ENCODE measurements at regions of chr1 and their contacts with region 1.

Region 1: GRCh38 chr1:180252638-180253536 is 22.8 kb downstream of the LHX4 start:
- DNase-seq: peak; percentile 13
- H3K4me3 ChIP-seq: no peak overlapping the region
- H3K27ac ChIP-seq: no peak overlapping the region
- H3K4me1 ChIP-seq: no peaks in the 10 kb centered on the region
- H3K27me3 ChIP-seq: peaks cover 0 to 91% (median 0%) of the 10 kb centered on the region in 4 donors
- CTCF ChIP-seq: peak; percentile 63 to 79 (median 70)
- POLR2A ChIP-seq: no peak

Region 2: DNA sequence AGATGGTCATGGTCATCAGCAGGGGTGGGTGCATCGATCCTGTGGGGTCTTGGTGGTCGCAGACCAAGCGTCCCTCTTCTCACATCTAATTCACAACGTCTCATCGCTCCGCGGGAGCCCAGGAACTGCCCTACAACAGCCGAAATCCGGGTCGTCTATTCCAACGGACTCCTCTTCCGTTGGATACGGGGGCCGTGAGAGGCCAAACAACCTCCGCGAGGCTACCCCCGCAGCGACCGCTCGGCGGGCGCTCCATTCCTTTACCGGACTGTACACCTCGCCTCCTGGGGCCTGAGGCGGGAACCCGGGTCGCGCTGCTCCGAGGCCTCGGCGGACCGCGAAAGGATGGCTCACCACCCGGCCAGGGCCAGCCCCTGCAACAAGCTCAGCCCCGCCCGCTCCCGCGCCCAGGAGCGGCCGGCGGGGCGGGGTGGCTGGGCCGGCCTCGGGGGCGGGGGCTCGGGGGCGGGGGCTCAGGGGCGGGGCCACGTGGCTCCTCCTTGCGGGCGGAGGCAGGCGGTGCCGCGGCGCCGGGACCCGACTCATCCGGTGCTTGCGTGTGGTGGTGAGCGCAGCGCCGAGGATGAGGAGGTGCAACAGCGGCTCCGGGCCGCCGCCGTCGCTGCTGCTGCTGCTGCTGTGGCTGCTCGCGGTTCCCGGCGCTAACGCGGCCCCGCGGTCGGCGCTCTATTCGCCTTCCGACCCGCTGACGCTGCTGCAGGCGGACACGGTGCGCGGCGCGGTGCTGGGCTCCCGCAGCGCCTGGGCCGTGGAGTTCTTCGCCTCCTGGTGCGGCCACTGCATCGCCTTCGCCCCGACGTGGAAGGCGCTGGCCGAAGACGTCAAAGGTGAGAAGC is 98.3 kb before region 1 on chr1 and contains the start of gene QSOX1:
- intact Hi-C with region 1: no loop called
- DNase-seq: peak; percentile 60
- H3K4me3 ChIP-seq: peak within 1 kb of the TSS; percentile 87 to 99 (median 92)
- H3K27ac ChIP-seq: peak within 1 kb of the TSS; percentile 87 to 96 (median 93)
- H3K4me1 ChIP-seq: peaks cover 6 to 61% (median 25%) of the 10 kb centered on the region in 3 donors
- H3K27me3 ChIP-seq: no peaks in the 10 kb centered on the region
- CTCF ChIP-seq: peak in 3 of 6 experiments; percentile 8 to 43 (median 17)
- POLR2A ChIP-seq: peak in 3 of 4 donors; percentile 83 to 96 (median 93)
- total RNA-seq, gene QSOX1: 74.9 to 184 (median 107) TPM

Region 3: DNA sequence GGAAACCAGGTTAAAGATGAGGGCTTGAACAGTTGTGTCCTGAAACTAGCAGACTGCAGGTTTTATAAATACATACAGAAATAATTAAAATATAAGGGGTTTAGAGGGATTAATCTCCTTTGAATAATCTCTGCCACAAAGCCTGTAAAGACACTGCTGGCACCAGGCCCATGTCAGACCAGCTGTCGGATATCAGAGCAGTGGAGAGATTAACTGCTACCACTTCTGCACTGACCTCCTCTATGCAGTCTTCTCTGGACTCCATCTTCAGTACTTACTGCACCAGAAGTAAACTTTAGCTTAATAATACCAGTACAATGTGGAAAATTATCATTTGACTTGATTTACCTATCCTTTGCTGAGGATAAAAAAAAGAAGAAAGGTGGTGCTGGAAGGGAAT is 105.8 kb after region 1 on chr1:
- intact Hi-C with region 1: no loop called
- DNase-seq: no peak
- H3K4me3 ChIP-seq: no peak overlapping the region
- H3K27ac ChIP-seq: no peak overlapping the region
- H3K4me1 ChIP-seq: peaks cover 0 to 5% (median 0%) of the 10 kb centered on the region in 3 donors
- H3K27me3 ChIP-seq: no peaks in the 10 kb centered on the region
- CTCF ChIP-seq: no peak
- POLR2A ChIP-seq: no peak

Region 4: GRCh38 chr1:180415985-180416633 is 163.2 kb after region 1 on chr1:
- intact Hi-C with region 1: loop called (anchors 10 kb)
- DNase-seq: no peak
- H3K4me3 ChIP-seq: no peak overlapping the region
- H3K27ac ChIP-seq: no peak overlapping the region
- H3K4me1 ChIP-seq: no peaks in the 10 kb centered on the region
- H3K27me3 ChIP-seq: no peaks in the 10 kb centered on the region
- CTCF ChIP-seq: peak in 5 of 6 experiments; percentile 25 to 56 (median 37)
- POLR2A ChIP-seq: no peak

Region 5: GRCh38 chr1:180470031-180470430 is 217.1 kb after region 1 on chr1:
- intact Hi-C with region 1: loop called (anchors 10 kb)
- DNase-seq: no peak
- H3K4me3 ChIP-seq: no peak overlapping the region
- H3K27ac ChIP-seq: no peak overlapping the region
- H3K4me1 ChIP-seq: no peaks in the 10 kb centered on the region
- H3K27me3 ChIP-seq: no peaks in the 10 kb centered on the region
- CTCF ChIP-seq: no peak
- POLR2A ChIP-seq: no peak

Measured in esophagus squamous epithelium (tissue), 5 donors.